ENCODE measurements at regions of chr2 and their contacts with region 1.

Region 1: DNA sequence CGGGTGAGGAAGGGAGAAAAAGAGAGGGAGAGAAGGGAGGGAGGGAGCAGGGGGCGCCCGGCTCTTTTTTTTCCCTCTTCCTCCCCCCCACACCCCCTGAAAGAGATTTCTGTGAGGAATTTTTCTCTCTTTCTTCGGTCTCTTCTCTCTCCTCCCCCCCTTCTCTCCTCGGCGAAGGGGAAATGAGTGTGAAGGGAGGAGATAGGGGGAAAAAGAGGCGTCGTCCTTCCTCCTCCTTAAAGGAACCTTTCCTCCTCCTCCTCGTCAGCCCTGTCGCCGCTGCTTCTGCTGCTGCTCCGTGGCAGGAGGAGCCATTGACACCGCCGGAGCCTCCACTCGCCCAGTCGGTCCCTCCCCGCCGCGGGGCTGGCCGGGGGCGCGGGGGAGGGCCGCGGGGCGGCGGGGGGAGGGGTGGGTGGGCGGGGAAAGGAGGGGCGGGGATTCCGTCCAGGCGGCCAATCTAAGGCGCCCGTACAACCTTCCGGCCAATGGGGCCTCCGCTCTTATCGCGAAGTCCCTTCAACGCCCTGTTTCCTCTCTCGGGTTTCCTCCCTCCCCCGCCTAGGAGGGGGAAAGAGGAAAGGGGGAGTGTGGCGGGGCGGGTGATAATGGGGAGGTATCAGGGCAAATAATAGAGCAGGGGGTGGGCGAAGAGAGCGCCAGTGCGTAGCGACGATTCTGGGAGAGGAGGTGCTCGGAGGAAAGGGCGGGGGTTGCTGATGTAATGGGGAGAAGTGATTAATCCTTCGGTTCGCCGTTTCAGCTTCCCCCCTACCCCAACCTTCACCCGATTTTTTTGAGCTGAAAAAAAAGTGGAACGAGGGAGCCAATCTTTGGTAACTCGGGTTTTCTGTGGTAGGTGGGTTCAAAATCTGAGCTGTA is at the start of gene FBXO11:
- DNase-seq: peak; percentile 96 to 97
- H3K4me3 ChIP-seq: peak within 1 kb of the TSS; percentile 56 to 96 (median 93)
- H3K27ac ChIP-seq: peak within 1 kb of the TSS; percentile 99
- H3K4me1 ChIP-seq: peaks cover 14 to 16% of the 10 kb centered on the region in 2 donors
- H3K27me3 ChIP-seq: no peaks in the 10 kb centered on the region
- CTCF ChIP-seq: peak in 5 of 6 experiments; percentile 49 to 73 (median 66)
- POLR2A ChIP-seq: peak; percentile 59 to 90
- total RNA-seq, gene FBXO11: 50.4 to 82.8 (median 60.6) TPM

Region 2: GRCh38 chr2:47782671-47783485 is 123.5 kb before region 1 on chr2 and contains the start of gene MSH6:
- intact Hi-C with region 1: loop called (anchors 5 kb)
- DNase-seq: peak; percentile 88
- H3K4me3 ChIP-seq: peak within 1 kb of the TSS; percentile 82 to 86 (median 83)
- H3K27ac ChIP-seq: peak within 1 kb of the TSS; percentile 74 to 94 (median 76)
- H3K4me1 ChIP-seq: peaks cover 11 to 23% of the 10 kb centered on the region in 2 donors
- H3K27me3 ChIP-seq: no peaks in the 10 kb centered on the region
- CTCF ChIP-seq: no peak
- POLR2A ChIP-seq: peak in 1 of 2 donors; percentile 87
- total RNA-seq, gene MSH6: 37.4 to 75.0 (median 52.0) TPM

Region 3: GRCh38 chr2:47869859-47870258 is 36.5 kb before region 1 on chr2:
- intact Hi-C with region 1: no loop called
- DNase-seq: no peak
- H3K4me3 ChIP-seq: no peak overlapping the region
- H3K27ac ChIP-seq: no peak overlapping the region
- H3K4me1 ChIP-seq: peaks cover 22 to 37% of the 10 kb centered on the region in 2 donors
- H3K27me3 ChIP-seq: no peaks in the 10 kb centered on the region
- CTCF ChIP-seq: no peak
- POLR2A ChIP-seq: no peak

Measured in thyroid gland (tissue), 4 donors.